Mammary epithelial cell (primary cell): ENCODE measurements at regions of chr19 and their contacts with region 1.

Region 1: GRCh38 chr19:42857561-42857901 is 22.0 kb downstream of the PSG1 start:
- DNase-seq: no peak
- H3K4me3 ChIP-seq: no peak overlapping the region
- H3K27ac ChIP-seq: no peak overlapping the region
- H3K4me1 ChIP-seq: peaks cover 8% of the 10 kb centered on the region
- H3K27me3 ChIP-seq: no peaks in the 10 kb centered on the region
- CTCF ChIP-seq: no peak

Region 2: DNA sequence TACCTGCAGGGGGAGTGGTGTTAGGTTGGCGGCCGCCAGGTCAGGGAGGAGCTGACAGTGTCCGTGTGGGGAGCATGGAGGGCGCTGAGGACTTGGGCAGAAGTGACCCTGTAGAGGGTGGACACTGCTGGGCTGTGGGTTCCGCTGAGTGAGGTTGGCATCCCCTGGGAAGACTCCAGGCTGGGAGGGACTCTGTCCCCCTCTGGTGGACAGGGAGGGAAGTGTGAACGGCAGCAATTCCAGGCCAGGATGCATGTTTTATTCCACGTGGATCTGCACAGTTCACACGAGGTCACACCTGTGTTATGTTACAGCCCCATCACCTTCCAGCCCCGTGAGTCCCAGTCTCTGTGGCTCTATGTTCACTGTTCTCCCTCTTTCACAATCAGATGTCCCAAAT is 23.7 kb after region 1 on chr19:
- CTCF ChIA-PET with region 1: no interaction called
- dilution Hi-C with region 1: no loop called
- in situ Hi-C with region 1: no loop called
- intact Hi-C with region 1: loop called (anchors 1 kb)
- DNase-seq: no peak
- H3K4me3 ChIP-seq: no peak overlapping the region
- H3K27ac ChIP-seq: no peak overlapping the region
- H3K4me1 ChIP-seq: peaks cover 26% of the 10 kb centered on the region
- H3K27me3 ChIP-seq: no peaks in the 10 kb centered on the region
- CTCF ChIP-seq: peak; percentile 58 to 73